HEK293 (cell line): ENCODE measurements at regions of chr7 and their contacts with region 1.

Region 1: DNA sequence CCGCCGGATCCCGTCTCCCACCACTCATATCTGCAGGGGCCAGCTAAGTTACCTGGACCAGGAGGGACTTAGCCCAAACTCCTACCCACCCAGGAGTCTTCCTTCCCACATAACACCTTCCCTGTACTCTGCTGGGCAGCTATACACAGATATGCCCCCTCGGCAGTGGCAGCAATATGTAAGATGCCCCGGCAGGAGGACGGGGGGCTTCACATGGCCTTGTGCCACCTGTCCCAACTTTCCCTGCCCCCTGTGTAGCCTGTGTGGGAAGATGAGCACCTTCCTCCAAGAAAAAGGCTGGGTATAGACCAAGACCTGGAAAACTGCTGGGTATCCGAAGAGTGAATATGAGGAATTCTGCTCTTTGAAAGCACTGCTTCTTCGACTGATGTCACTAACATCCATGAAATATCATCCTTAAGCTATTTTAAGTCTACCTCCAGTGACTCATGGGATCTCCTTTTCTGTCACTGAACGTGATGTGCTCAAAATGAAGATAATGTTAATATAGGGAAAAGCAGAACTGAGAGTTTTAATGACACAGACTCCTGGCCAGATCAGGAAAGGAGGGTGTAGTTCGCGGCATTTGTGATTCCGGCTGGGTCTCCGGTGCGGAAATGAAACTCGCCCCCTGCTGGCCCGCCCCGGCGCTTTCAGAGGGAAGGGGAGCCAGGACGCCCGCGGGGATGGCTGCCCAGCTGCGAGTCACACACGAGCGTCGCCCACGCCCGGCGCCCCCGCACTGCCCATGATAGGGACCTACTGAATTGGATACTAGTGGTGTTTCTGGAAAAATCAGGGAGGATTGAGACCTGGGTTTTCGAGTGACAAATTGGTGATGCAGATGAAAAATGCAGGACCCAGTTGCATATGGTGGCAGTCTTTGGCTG is 256.9 kb upstream of the NFE2L3 start:
- H3K4me3 ChIP-seq: peak overlapping the region; percentile 19
- H3K27ac ChIP-seq: peak overlapping the region; percentile 16; the same call in 1 of the 2 replicates
- H3K4me1 ChIP-seq: peaks cover 5% of the 10 kb centered on the region; the same call in 1 of the 2 replicates
- CTCF ChIP-seq: peak; percentile 65

Region 2: DNA sequence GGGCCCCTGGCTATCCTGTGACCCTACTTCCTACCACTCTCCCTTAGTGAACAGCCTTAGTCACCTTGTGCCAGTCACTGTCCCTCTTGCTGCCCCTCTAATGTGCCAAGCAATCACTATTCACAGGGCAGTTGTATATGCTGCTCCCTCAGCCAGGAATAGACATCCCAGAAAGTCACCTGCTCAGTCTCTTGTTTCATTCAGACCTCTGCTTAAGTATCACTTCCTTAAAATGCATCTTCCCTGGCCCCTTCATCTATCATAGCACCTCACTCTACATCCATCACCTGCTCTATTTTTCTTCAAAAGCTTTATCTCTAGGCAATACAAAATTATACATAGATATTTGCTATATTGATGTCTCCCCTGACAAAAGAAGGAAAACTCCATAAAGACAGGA is 71.6 kb before region 1 on chr7:
- CTCF ChIA-PET with region 1: no interaction called
- POLR2A ChIA-PET with region 1: no interaction called
- H3K4me3 ChIP-seq: no peak overlapping the region
- H3K27ac ChIP-seq: no peak overlapping the region
- H3K4me1 ChIP-seq: no peaks in the 10 kb centered on the region
- CTCF ChIP-seq: no peak

Region 3: GRCh38 chr7:25877802-25878789 is 17.1 kb before region 1 on chr7:
- CTCF ChIA-PET with region 1: interaction called, 19 read pairs
- POLR2A ChIA-PET with region 1: no interaction called
- H3K4me3 ChIP-seq: no peak overlapping the region
- H3K27ac ChIP-seq: peak overlapping the region; percentile 47; the same call in 1 of the 2 replicates
- H3K4me1 ChIP-seq: peaks cover 32% of the 10 kb centered on the region
- CTCF ChIP-seq: no peak

Region 4: GRCh38 chr7:25908154-25908949 is 13.2 kb after region 1 on chr7:
- CTCF ChIA-PET with region 1: interaction called, 14 read pairs
- POLR2A ChIA-PET with region 1: no interaction called
- H3K4me3 ChIP-seq: no peak overlapping the region
- H3K27ac ChIP-seq: no peak overlapping the region
- H3K4me1 ChIP-seq: peaks cover 5% of the 10 kb centered on the region
- CTCF ChIP-seq: no peak

Region 5: DNA sequence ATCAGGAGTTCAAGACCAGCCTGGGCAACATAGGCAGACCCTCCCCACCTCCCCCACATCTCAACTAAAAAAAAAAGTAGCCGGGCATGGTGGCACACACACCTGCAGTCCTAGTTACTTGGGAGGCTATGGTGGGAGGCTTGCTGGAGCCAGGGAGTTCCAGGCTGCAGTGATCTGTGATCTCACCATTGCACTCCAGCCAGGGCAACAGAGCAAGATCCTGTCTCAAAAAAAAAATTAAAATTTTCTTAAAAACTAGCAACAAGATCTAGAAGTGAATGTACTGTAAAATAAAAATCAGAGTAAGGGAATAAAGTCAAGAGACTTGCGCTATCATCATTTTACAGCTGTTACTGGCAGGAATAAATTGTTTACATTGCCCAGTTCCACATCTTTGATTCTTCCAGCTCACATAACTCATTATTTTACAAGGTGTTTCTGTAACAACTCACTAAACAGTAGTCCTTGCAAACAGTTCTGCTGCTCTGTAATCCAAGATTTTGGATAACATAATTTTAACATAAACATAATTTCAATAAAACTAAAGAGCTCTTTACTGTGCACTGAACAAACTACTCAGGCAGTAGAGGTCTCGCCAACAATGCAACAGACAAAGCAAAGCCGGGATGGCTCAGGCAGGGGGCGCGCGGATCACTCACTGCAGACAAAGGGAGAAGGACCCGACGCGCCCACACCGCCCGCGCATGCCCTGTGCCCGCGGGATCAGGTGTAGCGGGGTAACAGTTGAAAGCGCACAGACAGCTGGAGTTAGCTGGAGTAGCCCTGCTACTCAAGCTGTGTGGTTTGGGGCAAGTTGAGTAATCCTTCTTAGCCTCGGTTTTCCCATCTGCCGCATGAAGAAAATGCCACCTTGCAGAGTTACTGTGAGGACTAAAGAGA is 183.5 kb after region 1 on chr7:
- CTCF ChIA-PET with region 1: interaction called, 12 read pairs
- POLR2A ChIA-PET with region 1: no interaction called
- H3K4me3 ChIP-seq: peak overlapping the region; percentile 19; the same call in 1 of the 2 replicates
- H3K27ac ChIP-seq: no peak overlapping the region
- H3K4me1 ChIP-seq: peaks cover 23% of the 10 kb centered on the region
- CTCF ChIP-seq: peak; percentile 49; the same call in 1 of the 2 replicates

Region 6: GRCh38 chr7:26667500-26668133 is 772.5 kb after region 1 on chr7:
- CTCF ChIA-PET with region 1: interaction called, 27 read pairs
- POLR2A ChIA-PET with region 1: no interaction called
- H3K4me3 ChIP-seq: no peak overlapping the region
- H3K27ac ChIP-seq: no peak overlapping the region
- H3K4me1 ChIP-seq: peaks cover 16% of the 10 kb centered on the region
- CTCF ChIP-seq: peak; percentile 90